Left lung (tissue), 14 donors: ENCODE measurements at regions of chr12 and their contacts with region 1.

Region 1: DNA sequence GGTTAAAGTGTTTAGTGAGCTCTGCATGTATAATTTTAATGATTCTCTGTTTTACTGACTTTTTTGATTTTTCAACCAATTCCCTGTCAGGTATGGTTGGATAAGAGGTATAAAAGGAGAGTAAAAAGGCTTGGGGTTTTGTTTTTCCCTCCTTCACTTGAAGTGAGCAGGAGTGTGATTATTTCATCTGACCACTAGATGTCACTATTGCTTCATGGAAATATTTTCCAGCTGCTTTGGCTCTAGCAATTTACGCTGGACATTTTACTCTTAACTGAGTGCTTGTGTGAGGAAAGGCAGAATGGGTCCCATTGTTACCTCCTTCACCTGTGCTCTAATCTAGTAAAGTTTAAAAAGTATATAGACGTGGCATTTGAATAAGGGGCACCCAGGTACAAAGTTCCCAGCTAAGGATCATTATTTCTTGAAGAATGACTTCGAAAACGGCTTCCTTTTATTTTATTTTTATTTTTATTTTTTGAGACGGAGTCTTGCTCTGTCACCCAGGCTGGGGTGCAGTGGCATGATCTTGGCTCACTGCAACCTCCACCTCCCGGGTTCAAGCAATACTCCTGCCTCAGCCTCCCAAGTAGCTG is 66.5 kb downstream of the TBC1D30 start:
- DNase-seq: peak in 2 of 4 donors; percentile 57 to 80
- ATAC-seq: peak; percentile 93
- H3K4me3 ChIP-seq: no peak overlapping the region
- H3K27ac ChIP-seq: no peak overlapping the region
- H3K4me1 ChIP-seq: no peaks in the 10 kb centered on the region
- H3K27me3 ChIP-seq: no peaks in the 10 kb centered on the region
- CTCF ChIP-seq: peak; percentile 73 to 77

Region 2: DNA sequence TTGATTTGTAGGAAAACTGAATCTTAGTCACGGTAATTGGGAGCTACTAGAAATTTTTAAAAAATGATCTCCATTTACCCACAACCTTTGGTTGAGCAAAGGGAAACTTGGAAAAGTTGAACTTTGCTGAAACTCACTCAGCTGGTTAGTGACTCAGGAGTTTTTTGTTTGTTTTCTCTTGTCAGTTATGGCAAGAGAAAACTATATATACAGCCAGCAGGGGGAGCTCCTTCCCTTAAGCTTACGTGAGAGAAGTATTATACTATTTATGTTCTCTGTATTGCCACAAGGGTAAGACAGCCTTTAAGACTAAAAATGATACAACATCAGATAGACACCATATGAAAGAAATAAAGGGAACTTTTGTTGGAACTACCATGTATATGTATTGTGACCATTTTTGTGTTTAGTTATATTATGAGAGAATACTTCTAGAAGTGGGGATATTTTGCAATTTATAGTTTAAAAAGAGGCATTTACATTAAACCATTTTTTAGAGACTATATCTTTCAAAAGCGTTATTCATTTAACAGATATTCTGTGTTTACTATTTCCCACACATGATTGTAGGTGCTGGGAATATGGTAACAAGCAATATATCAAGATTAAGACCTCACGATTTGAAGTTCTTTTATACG is 94.6 kb before region 1 on chr12:
- intact Hi-C with region 1: no loop called
- DNase-seq: peak in 2 of 4 donors; percentile 72 to 89
- ATAC-seq: peak; percentile 96
- H3K4me3 ChIP-seq: no peak overlapping the region
- H3K27ac ChIP-seq: no peak overlapping the region
- H3K4me1 ChIP-seq: peaks cover 0 to 17% of the 10 kb centered on the region in 2 donors
- H3K27me3 ChIP-seq: no peaks in the 10 kb centered on the region
- CTCF ChIP-seq: peak; percentile 81 to 85

Region 3: DNA sequence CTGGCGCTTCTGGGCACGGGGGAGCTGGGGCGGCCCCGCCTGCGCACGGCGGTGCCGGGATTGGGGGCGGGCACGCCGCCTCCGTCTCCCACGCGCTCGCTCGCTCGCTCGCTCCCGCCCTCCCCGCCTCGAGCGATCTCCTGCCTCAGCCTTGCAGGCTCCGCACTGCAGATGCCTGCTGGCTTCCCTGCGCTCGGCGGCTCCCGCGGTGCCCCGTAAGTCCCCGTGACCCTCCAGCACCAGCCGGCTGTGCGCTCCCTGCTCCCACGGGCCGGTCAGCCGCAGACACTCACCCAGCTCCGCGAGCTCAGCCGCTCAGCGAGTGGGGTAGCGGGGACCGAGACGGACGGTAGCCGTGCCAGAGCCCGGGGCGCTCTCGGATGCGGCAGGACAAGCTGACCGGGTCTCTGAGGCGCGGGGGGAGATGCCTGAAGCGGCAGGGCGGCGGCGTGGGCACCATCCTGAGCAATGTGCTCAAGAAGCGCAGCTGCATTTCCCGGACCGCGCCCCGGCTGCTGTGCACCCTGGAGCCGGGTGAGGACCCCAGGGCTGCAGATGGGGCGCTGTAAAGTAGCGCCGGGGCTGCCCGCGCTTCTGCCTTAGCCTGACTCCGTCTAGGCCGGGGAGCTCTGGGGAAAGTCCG is 66.3 kb before region 1 on chr12 and contains the start of gene TBC1D30:
- intact Hi-C with region 1: no loop called
- DNase-seq: peak in 2 of 4 donors; percentile 24 to 80
- ATAC-seq: peak; percentile 84
- H3K4me3 ChIP-seq: peak within 1 kb of the TSS; percentile 26 to 32
- H3K27ac ChIP-seq: no peak within 1 kb of the TSS
- H3K4me1 ChIP-seq: peaks cover 16 to 23% of the 10 kb centered on the region in 2 donors
- H3K27me3 ChIP-seq: peaks cover 41 to 75% of the 10 kb centered on the region in 2 donors
- CTCF ChIP-seq: no peak
- polyA plus RNA-seq, gene TBC1D30: 4.3 to 13.5 (median 10.1) TPM

Region 4: GRCh38 chr12:64955746-64956145 is 64.8 kb after region 1 on chr12:
- intact Hi-C with region 1: no loop called
- DNase-seq: peak in 1 of 4 donors; percentile 49
- ATAC-seq: no peak
- H3K4me3 ChIP-seq: no peak overlapping the region
- H3K27ac ChIP-seq: no peak overlapping the region
- H3K4me1 ChIP-seq: no peaks in the 10 kb centered on the region
- H3K27me3 ChIP-seq: no peaks in the 10 kb centered on the region
- CTCF ChIP-seq: no peak

Region 5: DNA sequence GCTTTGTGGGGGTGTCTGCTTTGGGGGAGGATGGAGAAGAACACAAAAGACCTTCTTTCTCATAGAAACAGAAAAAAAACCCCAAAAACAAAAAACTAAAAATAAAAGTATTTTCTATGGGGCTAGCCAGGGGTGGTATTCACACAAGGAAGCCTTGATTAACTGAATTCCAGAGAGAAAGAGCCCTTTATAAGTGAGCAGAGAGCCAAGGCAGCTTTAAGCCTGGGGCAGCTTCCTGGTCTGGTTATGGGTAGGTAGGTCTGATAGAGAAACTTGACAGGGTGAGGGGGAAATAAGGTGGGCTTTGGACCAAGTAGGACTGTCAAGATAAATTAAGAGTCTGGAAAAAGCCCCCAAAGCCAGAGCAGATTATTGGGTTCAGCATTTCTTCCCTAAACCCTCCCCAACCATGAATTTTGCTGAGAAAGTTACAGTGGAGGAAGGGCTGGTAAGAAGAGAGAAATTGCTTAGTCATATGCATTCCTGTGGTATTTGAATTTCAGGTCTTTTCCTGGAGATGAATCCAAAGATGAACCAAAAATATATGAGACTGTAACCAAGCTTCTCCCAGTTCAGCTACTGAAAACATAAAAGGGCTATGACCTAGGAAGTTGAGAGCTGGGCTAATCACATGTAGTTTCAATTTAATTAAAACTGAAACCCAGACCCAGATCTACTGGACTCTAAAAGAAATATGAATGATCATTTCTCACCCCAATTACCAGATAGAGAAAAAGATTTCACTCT is 78.2 kb after region 1 on chr12:
- intact Hi-C with region 1: no loop called
- DNase-seq: no peak
- ATAC-seq: peak; percentile 35
- H3K4me3 ChIP-seq: no peak overlapping the region
- H3K27ac ChIP-seq: no peak overlapping the region
- H3K4me1 ChIP-seq: peaks cover 0 to 3% of the 10 kb centered on the region in 2 donors
- H3K27me3 ChIP-seq: no peaks in the 10 kb centered on the region
- CTCF ChIP-seq: no peak

Region 6: DNA sequence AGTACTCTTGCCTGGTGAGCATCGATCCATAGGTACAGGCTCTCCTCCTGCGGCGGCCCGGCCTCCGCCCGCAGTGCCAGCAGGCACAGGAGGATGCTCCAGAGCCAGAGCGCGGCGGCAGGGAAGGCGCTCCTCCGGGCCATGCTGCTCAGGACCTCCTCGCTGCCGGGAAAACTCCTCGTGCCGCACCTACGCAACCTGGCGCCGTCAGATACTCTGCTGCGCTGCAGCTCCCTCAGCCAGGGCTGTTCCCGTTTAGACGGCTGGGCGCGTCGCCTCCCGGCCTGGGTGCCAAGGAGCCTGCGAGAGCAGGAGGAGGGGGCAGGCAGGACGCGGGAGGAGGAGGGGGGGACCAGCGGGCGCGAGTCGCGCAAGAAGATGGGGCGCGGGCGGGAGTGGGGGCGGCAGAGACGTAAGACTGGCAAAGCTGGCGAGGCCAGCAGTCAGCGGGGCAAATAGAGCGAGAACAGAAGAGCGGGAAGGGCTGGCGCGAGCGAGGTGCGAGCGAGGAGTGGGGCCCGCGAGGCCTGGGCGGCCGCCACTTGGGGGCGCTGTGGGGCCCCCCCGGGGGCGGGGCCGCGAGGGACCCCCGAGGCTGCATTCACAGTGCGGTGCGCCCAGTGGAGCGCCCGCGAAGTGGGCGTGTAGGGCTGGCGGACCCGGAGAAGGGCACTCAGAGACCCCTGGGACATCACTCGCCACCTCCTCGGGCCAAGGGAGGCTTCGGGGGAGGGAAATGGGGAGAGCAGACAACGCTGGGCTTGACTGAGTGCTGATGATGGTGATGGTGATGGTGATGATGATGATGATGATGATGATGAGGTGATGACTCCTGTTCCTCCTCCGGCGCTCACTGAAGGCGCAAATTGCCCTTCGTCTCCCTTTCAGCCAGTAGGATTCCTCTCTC is 230.3 kb after region 1 on chr12 and contains the start of gene WIF1:
- intact Hi-C with region 1: loop called in 1 of 2 experiments (anchors 10 kb)
- DNase-seq: peak in 3 of 4 donors; percentile 65 to 88 (median 69)
- ATAC-seq: peak; percentile 81
- H3K4me3 ChIP-seq: peak within 1 kb of the TSS; percentile 24 to 36
- H3K27ac ChIP-seq: peak within 1 kb of the TSS in 1 of 2 donors; percentile 34
- H3K4me1 ChIP-seq: peaks cover 6 to 16% of the 10 kb centered on the region in 2 donors
- H3K27me3 ChIP-seq: peaks cover 36 to 83% of the 10 kb centered on the region in 2 donors
- CTCF ChIP-seq: peak in 1 of 2 donors; percentile 21
- polyA plus RNA-seq, gene WIF1: 196 to 311 (median 233) TPM